OCI-LY7 (cell line): ENCODE measurements at regions of chr1 and their contacts with region 1.

Region 1: GRCh38 chr1:9651565-9652378 is at the start of gene PIK3CD:
- DNase-seq: peak; percentile 64
- H3K4me3 ChIP-seq: peak within 1 kb of the TSS; percentile 70
- H3K27ac ChIP-seq: peak within 1 kb of the TSS; percentile 42
- H3K4me1 ChIP-seq: peaks cover 51% of the 10 kb centered on the region
- CTCF ChIP-seq: 0 out of 2 replicates have a peak, but pooled peaks have one; percentile 16
- total RNA-seq, gene PIK3CD: 7.5 and 13.6 TPM in 2 replicates

Region 2: GRCh38 chr1:9687120-9687873 is 35.5 kb after region 1 on chr1:
- CTCF ChIA-PET with region 1: interaction called, 3 read pairs
- POLR2A ChIA-PET with region 1: interaction called, 8 read pairs
- intact Hi-C with region 1: loop called (anchors 2 kb)
- DNase-seq: peak; percentile 82
- H3K4me3 ChIP-seq: peak overlapping the region; percentile 66
- H3K27ac ChIP-seq: no peak overlapping the region
- H3K4me1 ChIP-seq: peaks cover 29% of the 10 kb centered on the region
- CTCF ChIP-seq: no peak

Region 3: DNA sequence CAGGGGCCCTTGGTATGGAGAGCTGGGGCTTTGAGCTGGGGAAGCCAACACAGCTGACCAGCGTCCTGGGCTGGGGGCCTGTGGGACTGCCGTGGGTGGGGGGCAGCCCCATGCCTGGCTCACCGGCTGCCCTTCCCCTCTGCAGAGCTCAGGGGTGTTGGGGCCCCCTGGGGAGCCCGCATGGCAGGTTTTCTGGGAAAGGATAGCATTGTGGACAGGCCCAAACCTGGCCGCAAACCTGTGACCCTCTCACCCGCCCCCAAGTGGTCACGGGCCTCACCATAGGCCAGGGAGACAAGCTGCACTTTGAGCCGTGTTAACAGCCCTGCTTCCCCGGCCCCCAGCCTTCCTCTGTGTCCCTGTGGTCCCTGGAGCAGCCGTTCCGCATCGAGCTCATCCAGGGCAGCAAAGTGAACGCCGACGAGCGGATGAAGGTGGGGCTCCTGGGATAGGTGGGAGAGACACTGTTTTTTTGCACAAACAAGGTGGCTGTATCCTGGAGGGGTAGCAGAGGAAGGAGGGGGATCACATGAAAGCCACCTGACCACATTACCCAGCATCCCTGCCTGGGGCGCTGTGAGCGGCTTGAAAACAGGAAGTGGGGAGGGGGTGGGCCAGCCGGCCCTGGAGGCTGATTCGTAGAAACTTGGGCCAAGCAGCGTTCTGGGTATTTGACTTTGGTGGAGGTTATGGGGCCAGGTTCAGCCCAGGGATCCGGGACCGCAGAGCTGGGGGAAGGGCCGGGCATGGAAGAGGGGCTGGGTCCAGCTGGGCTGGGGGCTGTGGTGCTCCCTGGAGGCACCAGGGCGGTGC is 65.6 kb after region 1 on chr1:
- CTCF ChIA-PET with region 1: no interaction called
- POLR2A ChIA-PET with region 1: interaction called, 4 read pairs
- intact Hi-C with region 1: loop called (anchors 2 kb)
- DNase-seq: peak; percentile 95
- H3K4me3 ChIP-seq: peak overlapping the region; percentile 79
- H3K27ac ChIP-seq: peak overlapping the region; percentile 73
- H3K4me1 ChIP-seq: peaks cover 51% of the 10 kb centered on the region
- CTCF ChIP-seq: peak; percentile 25; the same call in 1 of the 2 replicates